CD4-positive, alpha-beta memory T cell (primary cell): ENCODE measurements at regions of chr13 and their contacts with region 1.

Region 1: DNA sequence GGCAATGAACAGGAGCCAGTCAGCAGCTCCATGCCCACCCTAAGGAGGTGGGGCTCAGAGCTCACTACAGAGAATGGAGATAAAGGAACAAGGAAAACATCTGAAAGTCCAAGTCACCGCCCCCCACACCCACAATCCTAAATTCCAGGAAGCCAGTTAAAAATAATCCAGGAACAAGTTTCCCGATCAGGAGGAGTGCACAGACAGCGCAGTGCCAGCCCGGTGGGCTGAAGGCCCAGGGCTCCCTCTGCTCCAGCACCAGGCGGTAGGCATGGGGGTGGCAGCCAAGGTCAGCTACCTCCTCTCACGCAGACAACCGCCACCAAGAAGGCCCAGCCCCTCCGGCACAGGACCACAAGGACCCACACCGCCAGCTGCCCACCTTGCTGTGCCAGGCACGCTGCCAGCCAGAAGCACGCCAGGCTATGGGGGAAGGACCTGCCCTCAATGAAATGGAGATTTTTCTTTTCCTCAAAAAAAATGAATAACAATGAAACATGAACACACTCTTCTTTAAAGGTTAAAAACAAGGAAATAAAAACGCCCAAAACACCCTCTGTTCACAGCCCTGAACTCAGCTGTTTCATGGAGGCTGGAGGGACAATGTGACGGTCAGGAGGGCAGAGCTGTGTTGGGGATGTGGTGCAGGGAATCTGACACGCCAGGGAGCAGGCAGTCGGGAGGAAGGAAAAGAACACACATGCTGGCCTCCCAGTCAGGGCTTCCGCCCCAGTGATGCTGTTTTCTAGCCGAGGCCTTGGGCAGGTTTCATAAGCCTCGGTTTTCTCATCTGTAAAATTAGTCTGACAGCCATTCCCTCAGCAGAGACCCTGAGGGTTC is 11.0 kb downstream of the STK24 start:
- DNase-seq: no peak
- H3K4me3 ChIP-seq: peak overlapping the region; percentile 4 to 39
- H3K4me3 Mint-ChIP-seq: peak overlapping the region; percentile 63 to 97 (median 86)
- H3K27ac ChIP-seq: peak overlapping the region; percentile 81
- H3K27ac Mint-ChIP-seq: peak overlapping the region; percentile 94 to 98 (median 97)
- H3K4me1 ChIP-seq: peaks cover 93% of the 10 kb centered on the region
- H3K4me1 Mint-ChIP-seq: peaks cover 72 to 98% (median 85%) of the 10 kb centered on the region in 4 donors
- H3K27me3 ChIP-seq: no peaks in the 10 kb centered on the region
- H3K27me3 Mint-ChIP-seq: no peaks in the 10 kb centered on the region

Region 2: DNA sequence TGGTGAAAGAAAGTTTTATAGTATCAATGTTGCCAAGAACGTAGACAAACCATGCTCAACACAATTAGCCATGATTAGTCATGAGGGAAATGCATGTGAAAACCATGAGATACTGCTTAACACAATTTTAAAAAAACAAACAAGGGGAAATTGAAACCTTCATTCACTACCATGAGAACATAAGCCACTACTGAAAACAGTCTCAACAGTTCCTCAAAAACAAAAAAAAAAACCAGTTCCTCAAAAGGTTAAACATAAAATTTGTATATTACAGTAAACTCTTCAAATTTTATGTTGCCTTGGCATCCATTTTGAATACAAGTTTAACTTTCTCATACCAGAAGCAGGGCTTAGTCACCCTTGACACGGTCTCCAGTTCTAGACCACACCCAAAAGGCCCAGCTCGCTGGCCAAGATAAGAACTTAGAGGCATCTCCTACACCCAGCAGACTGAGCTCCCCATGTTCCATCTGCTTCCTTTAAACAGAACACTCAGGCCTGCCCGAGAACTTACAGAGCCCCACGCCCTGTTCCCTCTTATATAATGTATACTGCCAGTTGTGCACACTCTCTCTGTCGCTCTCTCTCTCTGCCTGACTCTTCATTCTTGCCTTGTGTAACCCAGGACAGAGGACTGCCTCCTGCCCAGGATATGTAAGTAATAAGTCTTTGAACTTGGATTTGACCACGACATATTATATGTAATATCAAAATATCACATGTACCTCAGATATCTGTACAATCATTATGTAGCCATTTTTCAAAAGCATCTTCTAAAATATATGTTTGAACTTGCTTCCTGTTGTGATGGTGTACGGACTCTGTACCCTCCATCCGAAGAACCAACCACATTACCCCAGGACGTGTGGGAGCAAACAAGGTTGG is 56.4 kb before region 1 on chr13:
- CTCF ChIA-PET with region 1: interaction called, 4 read pairs
- POLR2A ChIA-PET with region 1: interaction called, 6 read pairs
- intact Hi-C with region 1: loop called (anchors 5 kb)
- DNase-seq: peak in 4 of 5 donors; percentile 22 to 74 (median 38)
- H3K4me3 ChIP-seq: no peak overlapping the region
- H3K4me3 Mint-ChIP-seq: peak overlapping the region in 7 of 8 donors; percentile 33 to 78 (median 64)
- H3K27ac ChIP-seq: peak overlapping the region; percentile 36
- H3K27ac Mint-ChIP-seq: peak overlapping the region; percentile 80 to 95 (median 87)
- H3K4me1 ChIP-seq: peaks cover 100% of the 10 kb centered on the region
- H3K4me1 Mint-ChIP-seq: peaks cover 73 to 100% (median 89%) of the 10 kb centered on the region in 4 donors
- H3K27me3 ChIP-seq: no peaks in the 10 kb centered on the region
- H3K27me3 Mint-ChIP-seq: no peaks in the 10 kb centered on the region

Region 3: GRCh38 chr13:98549006-98549727 is 16.8 kb before region 1 on chr13:
- CTCF ChIA-PET with region 1: interaction called, 4 read pairs
- POLR2A ChIA-PET with region 1: interaction called, 15 read pairs
- intact Hi-C with region 1: no loop called
- DNase-seq: no peak
- H3K4me3 ChIP-seq: no peak overlapping the region
- H3K4me3 Mint-ChIP-seq: peak overlapping the region in 5 of 8 donors; percentile 2 to 49 (median 27)
- H3K27ac ChIP-seq: no peak overlapping the region
- H3K27ac Mint-ChIP-seq: peak overlapping the region; percentile 34 to 91 (median 79)
- H3K4me1 ChIP-seq: peaks cover 85% of the 10 kb centered on the region
- H3K4me1 Mint-ChIP-seq: peaks cover 61 to 97% (median 79%) of the 10 kb centered on the region in 4 donors
- H3K27me3 ChIP-seq: no peaks in the 10 kb centered on the region
- H3K27me3 Mint-ChIP-seq: no peaks in the 10 kb centered on the region

Region 4: GRCh38 chr13:98576963-98577822 is 11.2 kb after region 1 on chr13 and contains the start of gene STK24:
- CTCF ChIA-PET with region 1: interaction called, 7 read pairs
- POLR2A ChIA-PET with region 1: interaction called, 87 read pairs
- intact Hi-C with region 1: loop called (anchors 1 kb)
- DNase-seq: peak; percentile 52 to 73 (median 56)
- H3K4me3 ChIP-seq: peak within 1 kb of the TSS; percentile 74 to 75
- H3K4me3 Mint-ChIP-seq: peak within 1 kb of the TSS; percentile 89 to 97 (median 95)
- H3K27ac ChIP-seq: peak within 1 kb of the TSS; percentile 81
- H3K27ac Mint-ChIP-seq: peak within 1 kb of the TSS; percentile 92 to 97 (median 95)
- H3K4me1 ChIP-seq: peaks cover 34% of the 10 kb centered on the region
- H3K4me1 Mint-ChIP-seq: peaks cover 21 to 42% (median 33%) of the 10 kb centered on the region in 4 donors
- H3K27me3 ChIP-seq: no peaks in the 10 kb centered on the region
- H3K27me3 Mint-ChIP-seq: no peaks in the 10 kb centered on the region
- total RNA-seq, gene STK24: 146 to 147 TPM